ENCODE measurements at regions of chr6 and their contacts with region 1.

Region 1: DNA sequence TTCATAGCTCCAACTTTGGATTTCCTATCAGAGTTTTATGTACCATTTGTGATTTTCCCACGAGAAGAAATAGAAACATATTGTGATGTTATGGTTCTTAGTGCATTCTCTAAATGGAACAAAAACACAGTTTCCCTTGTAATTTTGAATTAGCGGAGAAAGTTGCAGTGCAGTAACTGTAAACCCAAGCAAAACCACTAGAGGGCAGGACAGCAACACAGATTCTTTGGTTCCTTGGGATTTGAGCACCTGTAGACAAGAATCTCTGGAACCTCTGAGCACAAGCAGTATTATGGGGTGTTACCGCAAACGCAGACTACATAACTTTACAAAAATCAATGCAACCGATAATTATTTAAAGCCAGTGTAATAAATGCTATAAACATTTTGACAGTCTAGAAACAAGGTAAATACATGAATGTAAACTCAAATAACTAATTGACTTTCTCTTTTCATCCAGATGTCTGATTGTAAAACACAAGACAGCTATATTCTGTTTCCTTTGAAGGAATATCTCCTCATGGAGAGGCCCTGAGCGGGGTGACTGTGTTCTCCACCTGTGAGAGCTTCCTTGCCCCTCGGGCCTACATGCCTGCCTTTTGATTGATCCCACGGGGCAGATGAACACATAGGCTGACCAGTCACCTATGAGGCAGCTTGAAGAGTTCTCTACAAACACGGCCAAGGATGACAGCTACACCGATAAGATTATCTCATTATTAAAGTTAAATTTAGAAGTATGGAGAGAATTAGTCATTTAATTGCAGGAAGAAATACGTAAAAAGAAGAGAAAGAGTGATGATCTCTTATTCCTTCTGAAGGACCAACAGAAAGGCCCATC is 67.5 kb upstream of the COL21A1 start:
- DNase-seq: peak; percentile 26
- H3K4me3 ChIP-seq: no peak overlapping the region; a peak in 1 of 4 replicates
- H3K27ac ChIP-seq: no peak overlapping the region
- H3K4me1 ChIP-seq: no peaks in the 10 kb centered on the region
- H3K27me3 ChIP-seq: no peaks in the 10 kb centered on the region
- CTCF ChIP-seq: peak; percentile 94
- EP300 ChIP-seq: no peak
- RAD21 ChIP-seq: peak; percentile 90

Region 2: GRCh38 chr6:56329271-56330050 is 14.6 kb after region 1 on chr6:
- CTCF ChIA-PET with region 1: interaction called, 22 read pairs
- POLR2A ChIA-PET with region 1: no interaction called
- DNase-seq: no peak
- H3K4me3 ChIP-seq: no peak overlapping the region
- H3K27ac ChIP-seq: peak overlapping the region; percentile 42 to 50
- H3K4me1 ChIP-seq: peaks cover 5 to 10% of the 10 kb centered on the region in 2 experiments; a peak in 3 of 4 replicates
- H3K27me3 ChIP-seq: no peaks in the 10 kb centered on the region
- CTCF ChIP-seq: no peak
- EP300 ChIP-seq: no peak
- RAD21 ChIP-seq: no peak

Region 3: DNA sequence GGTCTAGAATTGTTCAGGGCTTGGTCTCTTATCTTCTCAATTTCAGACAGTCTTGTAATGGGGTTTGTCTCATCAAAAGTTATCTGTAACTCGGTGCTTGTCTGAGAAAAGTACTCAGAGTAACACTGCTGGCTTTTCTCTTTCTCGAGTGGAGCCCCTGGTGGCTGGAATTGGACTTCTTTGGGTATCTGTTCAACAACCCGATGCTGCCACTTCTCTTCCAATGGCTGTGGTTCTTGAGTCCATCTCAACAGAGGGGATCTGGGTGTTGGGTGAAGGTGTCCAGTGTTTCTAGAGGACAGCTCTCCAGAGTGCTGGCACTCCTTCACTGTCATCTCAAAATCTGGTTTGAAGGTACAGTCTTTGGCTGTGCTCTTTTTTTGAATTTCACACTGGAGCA is 303.1 kb after region 1 on chr6:
- CTCF ChIA-PET with region 1: interaction called, 13 read pairs
- POLR2A ChIA-PET with region 1: no interaction called
- DNase-seq: no peak
- H3K4me3 ChIP-seq: no peak overlapping the region
- H3K27ac ChIP-seq: no peak overlapping the region
- H3K4me1 ChIP-seq: no peaks in the 10 kb centered on the region
- H3K27me3 ChIP-seq: no peaks in the 10 kb centered on the region
- CTCF ChIP-seq: peak; percentile 38
- EP300 ChIP-seq: no peak
- RAD21 ChIP-seq: no peak